ENCODE measurements at regions of chr11 and their contacts with region 1.

Region 1: DNA sequence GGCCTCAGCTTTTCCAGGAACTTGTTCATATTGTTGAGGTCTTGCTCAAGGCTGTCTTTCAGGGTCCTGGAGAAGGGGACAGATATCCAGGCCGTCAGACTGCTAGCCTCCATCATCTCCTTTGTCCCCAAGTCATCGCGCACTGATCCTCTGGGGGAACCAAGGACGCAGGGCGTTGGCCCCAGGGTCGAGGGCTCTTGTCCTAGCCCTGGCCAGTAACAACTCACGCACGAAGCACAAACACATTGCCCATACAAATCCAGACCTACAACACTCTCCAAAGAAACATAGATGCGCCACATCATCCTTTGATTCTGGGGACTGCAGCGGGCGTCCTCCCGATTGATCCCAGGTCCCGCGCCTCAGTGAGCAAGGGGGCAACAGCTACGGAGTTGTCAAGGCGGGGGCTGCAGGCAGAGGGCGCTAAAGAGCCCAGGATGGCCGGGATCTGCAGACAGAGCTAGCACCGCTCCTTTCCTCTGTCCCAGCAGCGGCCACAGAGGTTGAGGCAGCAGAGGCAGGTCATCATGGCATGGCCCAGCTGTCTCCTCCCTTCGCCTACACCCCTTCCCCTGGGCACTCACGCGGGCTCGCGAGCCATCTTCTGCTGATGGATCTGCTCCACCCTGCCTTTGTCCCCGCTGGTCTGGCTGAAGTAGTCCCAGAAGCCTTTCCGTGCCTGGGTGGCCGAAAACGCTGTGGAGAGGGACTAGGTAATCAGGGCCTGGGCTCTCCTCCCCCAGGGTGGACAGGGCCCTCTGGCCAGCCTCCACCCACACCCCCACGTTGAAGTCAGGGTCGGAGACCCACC is 472 bp downstream of the APOA5 start:
- DNase-seq: peak; percentile 86 to 89 (median 88)
- ATAC-seq: peak; percentile 42 to 81 (median 66)
- H3K4me3 ChIP-seq: peak overlapping the region; percentile 10 to 90 (median 82)
- H3K27ac ChIP-seq: peak overlapping the region; percentile 34 to 83 (median 73)
- H3K4me1 ChIP-seq: peaks cover 0 to 54% (median 5%) of the 10 kb centered on the region in 4 donors
- H3K27me3 ChIP-seq: no peaks in the 10 kb centered on the region
- CTCF ChIP-seq: peak; percentile 83 to 94 (median 92)
- POLR2A ChIP-seq: peak; percentile 40

Region 2: DNA sequence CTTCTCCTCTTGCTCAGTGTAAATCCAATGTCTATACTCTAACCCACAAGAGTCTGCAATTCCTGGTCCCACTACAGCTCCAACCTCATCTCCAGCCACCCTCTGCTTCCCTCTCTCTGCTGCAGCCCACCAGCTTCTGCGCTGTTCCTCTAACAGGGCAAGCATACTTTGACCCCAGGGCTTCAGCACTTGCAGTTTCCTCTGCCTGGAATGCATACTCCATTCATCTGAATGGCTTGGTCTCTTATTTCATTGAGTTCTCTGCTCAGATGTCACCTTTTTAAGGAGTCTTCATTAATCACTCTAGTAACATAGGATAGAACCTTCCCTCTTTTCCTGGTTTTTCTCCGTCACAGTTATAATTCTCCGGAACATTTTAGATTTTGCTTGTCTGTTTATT is 160.0 kb before region 1 on chr11:
- intact Hi-C with region 1: no loop called
- DNase-seq: no peak
- ATAC-seq: no peak
- H3K4me3 ChIP-seq: no peak overlapping the region
- H3K27ac ChIP-seq: no peak overlapping the region
- H3K4me1 ChIP-seq: peaks cover 0 to 4% (median 2%) of the 10 kb centered on the region in 4 donors
- H3K27me3 ChIP-seq: no peaks in the 10 kb centered on the region
- CTCF ChIP-seq: no peak
- POLR2A ChIP-seq: no peak

Region 3: GRCh38 chr11:116661056-116661455 is 130.2 kb before region 1 on chr11:
- intact Hi-C with region 1: no loop called
- DNase-seq: peak; percentile 71 to 86 (median 71)
- ATAC-seq: peak; percentile 88 to 93 (median 91)
- H3K4me3 ChIP-seq: no peak overlapping the region
- H3K27ac ChIP-seq: peak overlapping the region; percentile 57 to 83 (median 77)
- H3K4me1 ChIP-seq: peaks cover 0 to 48% (median 25%) of the 10 kb centered on the region in 4 donors
- H3K27me3 ChIP-seq: no peaks in the 10 kb centered on the region
- CTCF ChIP-seq: no peak
- POLR2A ChIP-seq: no peak

Region 4: GRCh38 chr11:116680349-116681125 is 110.7 kb before region 1 on chr11:
- intact Hi-C with region 1: no loop called
- DNase-seq: peak in 1 of 3 donors; percentile 5
- ATAC-seq: no peak
- H3K4me3 ChIP-seq: no peak overlapping the region
- H3K27ac ChIP-seq: no peak overlapping the region
- H3K4me1 ChIP-seq: no peaks in the 10 kb centered on the region
- H3K27me3 ChIP-seq: no peaks in the 10 kb centered on the region
- CTCF ChIP-seq: no peak
- POLR2A ChIP-seq: no peak

Region 5: DNA sequence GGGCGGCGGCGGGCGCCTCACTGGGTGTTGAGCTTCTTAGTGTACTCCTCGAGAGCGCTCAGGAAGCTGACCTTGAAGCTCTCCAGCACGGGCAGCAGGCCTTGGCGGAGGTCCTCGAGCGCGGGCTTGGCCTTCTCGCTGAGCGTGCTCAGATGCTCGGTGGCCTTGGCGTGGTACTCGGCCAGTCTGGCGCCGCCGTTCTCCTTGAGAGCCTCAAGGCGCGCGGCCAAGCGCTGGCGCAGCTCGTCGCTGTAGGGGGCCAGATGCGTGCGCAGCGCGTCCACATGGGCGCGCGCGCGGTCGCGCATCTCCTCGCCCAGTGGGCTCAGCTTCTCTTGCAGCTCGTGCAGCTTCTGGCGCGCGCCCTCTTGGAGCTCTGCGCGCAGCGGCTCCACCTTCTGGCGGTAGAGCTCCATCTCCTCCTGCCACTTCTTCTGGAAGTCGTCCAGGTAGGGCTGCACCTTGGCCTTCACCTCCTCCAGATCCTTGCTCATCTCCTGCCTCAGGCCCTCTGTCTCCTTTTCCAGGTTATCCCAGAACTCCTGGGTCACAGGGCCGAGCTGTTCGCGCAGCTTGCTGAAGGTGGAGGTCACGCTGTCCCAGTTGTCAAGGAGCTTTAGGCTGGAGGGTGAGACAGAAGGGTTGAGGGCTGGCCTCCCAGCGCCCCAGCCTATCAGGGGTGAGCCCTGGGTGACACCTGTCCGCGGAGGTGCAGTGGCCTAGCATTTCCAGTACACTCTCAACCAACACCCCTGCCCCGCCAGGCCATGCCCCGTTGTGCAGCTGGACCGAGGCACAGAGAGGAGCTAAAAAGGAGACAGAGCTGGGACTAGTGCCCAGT is 44.8 kb after region 1 on chr11:
- intact Hi-C with region 1: loop called in 1 of 2 experiments (anchors 5 kb)
- DNase-seq: peak; percentile 80 to 83 (median 82)
- ATAC-seq: peak; percentile 0 to 25 (median 12)
- H3K4me3 ChIP-seq: peak overlapping the region; percentile 54 to 92 (median 78)
- H3K27ac ChIP-seq: peak overlapping the region; percentile 75 to 87 (median 85)
- H3K4me1 ChIP-seq: peaks cover 0 to 40% (median 16%) of the 10 kb centered on the region in 4 donors
- H3K27me3 ChIP-seq: no peaks in the 10 kb centered on the region
- CTCF ChIP-seq: peak; percentile 36 to 53 (median 42)
- POLR2A ChIP-seq: peak; percentile 40

Region 6: DNA sequence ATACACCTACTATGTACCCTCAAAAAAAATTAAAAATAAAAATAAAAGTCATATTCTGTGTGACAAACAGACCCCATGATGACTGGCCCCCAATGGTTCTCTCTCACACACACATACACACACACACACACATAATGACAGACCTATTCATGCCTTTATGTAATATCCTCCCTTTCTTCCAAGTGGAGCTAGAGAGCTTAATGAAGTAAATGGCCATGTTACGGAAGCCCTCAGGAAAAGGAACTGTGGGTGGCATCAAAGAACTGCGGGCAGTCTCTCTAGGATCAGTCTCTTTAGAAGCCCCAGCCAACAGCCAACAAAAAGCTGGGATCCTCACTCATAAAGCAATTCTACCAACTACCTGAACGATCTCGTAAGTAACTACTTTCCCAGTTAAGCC is 181.5 kb after region 1 on chr11:
- intact Hi-C with region 1: no loop called
- DNase-seq: no peak
- ATAC-seq: peak; percentile 36 to 71 (median 55)
- H3K4me3 ChIP-seq: no peak overlapping the region
- H3K27ac ChIP-seq: peak overlapping the region in 1 of 3 donors; percentile 52
- H3K4me1 ChIP-seq: peaks cover 0 to 12% (median 4%) of the 10 kb centered on the region in 4 donors
- H3K27me3 ChIP-seq: no peaks in the 10 kb centered on the region
- CTCF ChIP-seq: no peak
- POLR2A ChIP-seq: no peak

Measured in right lobe of liver (tissue), 6 donors.